ENCODE measurements at regions of chr1 and their contacts with region 1.

Region 1: GRCh38 chr1:61362351-61362750 is 280.0 kb downstream of the NFIA start:
- DNase-seq: no peak
- ATAC-seq: no peak
- H3K4me3 ChIP-seq: no peak overlapping the region
- H3K27ac ChIP-seq: peak overlapping the region in 5 of 12 donors; percentile 1 to 31 (median 27)
- H3K4me1 ChIP-seq: peaks cover 0 to 21% (median 8%) of the 10 kb centered on the region in 12 donors
- H3K27me3 ChIP-seq: no peaks in the 10 kb centered on the region
- CTCF ChIP-seq: no peak
- POLR2A ChIP-seq: no peak

Region 2: GRCh38 chr1:61397935-61398334 is 35.6 kb after region 1 on chr1:
- intact Hi-C with region 1: loop called in 1 of 10 experiments (anchors 5 kb)
- DNase-seq: no peak
- ATAC-seq: peak in 1 of 4 donors; percentile 18
- H3K4me3 ChIP-seq: no peak overlapping the region
- H3K27ac ChIP-seq: peak overlapping the region in 1 of 12 donors; percentile 55
- H3K4me1 ChIP-seq: peaks cover 0 to 33% (median 10%) of the 10 kb centered on the region in 12 donors
- H3K27me3 ChIP-seq: no peaks in the 10 kb centered on the region
- CTCF ChIP-seq: no peak
- POLR2A ChIP-seq: no peak